Heart right ventricle (tissue), 16 donors: ENCODE measurements at regions of chr3 and their contacts with region 1.

Region 1: DNA sequence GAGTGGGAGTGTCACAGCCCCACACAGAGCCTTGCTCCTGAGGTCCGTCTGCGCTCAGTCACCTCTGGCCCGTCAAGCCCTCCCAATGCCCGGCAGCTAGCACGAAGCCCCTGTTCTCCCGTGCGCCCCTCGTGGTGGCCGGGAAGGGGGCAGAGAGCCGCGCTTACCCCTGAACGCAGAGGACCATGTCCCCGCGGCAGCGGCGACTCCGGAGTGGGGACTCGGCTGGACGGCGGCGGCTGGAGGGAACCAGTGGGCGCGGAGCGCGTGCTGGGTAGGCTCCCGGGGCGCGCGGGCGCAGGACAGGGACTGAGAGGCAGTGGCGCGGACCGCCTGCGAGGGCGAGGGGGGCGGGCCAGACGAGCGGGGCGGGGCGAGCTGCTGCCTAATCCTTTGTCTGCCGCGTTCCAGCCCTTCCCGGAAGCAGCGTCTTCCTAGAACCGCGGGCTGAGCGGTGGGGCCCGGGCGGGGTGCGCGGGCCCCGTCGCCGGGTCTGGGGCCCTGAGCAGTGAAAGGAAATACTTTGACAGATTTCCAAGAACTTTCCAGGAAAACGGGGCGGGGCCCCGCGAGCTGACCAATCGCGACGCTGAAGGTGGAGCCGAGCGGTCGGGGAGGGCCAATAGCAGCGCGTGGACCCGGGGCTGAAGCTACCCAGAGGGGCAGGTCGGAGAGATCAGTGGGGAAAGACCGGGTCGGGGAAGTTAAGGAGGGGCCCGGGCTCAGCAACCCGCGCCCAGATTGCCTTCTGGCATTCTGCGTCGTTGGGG is at the start of gene CISH:
- DNase-seq: peak; percentile 95 to 97
- ATAC-seq: peak; percentile 79 to 88 (median 84)
- H3K4me3 ChIP-seq: peak within 1 kb of the TSS; percentile 42 to 93 (median 78)
- H3K27ac ChIP-seq: peak within 1 kb of the TSS; percentile 72 to 99 (median 95)
- H3K4me1 ChIP-seq: peaks cover 11 to 82% (median 68%) of the 10 kb centered on the region in 9 donors
- H3K27me3 ChIP-seq: no peaks in the 10 kb centered on the region
- CTCF ChIP-seq: peak in 7 of 9 donors; percentile 29 to 58 (median 45)
- total RNA-seq, gene CISH: 5.4 to 131 (median 24.0) TPM

Region 2: GRCh38 chr3:50350527-50351322 is 260.9 kb before region 1 on chr3 and contains the starts of genes CYB561D2 and NPRL2:
- intact Hi-C with region 1: loop called in 3 of 10 experiments (anchors 5 kb)
- DNase-seq: peak; percentile 96 to 98
- ATAC-seq: peak; percentile 94 to 97 (median 96)
- H3K4me3 ChIP-seq: peak within 1 kb of the TSS; percentile 42 to 89 (median 72)
- H3K27ac ChIP-seq: peak within 1 kb of the TSS; percentile 84 to 97 (median 92)
- H3K4me1 ChIP-seq: peaks cover 21 to 63% (median 42%) of the 10 kb centered on the region in 9 donors
- H3K27me3 ChIP-seq: no peaks in the 10 kb centered on the region
- CTCF ChIP-seq: no peak
- total RNA-seq, gene CYB561D2: 3.9 to 10.9 (median 5.6) TPM
- total RNA-seq, gene NPRL2: 13.0 to 23.6 (median 16.3) TPM

Region 3: DNA sequence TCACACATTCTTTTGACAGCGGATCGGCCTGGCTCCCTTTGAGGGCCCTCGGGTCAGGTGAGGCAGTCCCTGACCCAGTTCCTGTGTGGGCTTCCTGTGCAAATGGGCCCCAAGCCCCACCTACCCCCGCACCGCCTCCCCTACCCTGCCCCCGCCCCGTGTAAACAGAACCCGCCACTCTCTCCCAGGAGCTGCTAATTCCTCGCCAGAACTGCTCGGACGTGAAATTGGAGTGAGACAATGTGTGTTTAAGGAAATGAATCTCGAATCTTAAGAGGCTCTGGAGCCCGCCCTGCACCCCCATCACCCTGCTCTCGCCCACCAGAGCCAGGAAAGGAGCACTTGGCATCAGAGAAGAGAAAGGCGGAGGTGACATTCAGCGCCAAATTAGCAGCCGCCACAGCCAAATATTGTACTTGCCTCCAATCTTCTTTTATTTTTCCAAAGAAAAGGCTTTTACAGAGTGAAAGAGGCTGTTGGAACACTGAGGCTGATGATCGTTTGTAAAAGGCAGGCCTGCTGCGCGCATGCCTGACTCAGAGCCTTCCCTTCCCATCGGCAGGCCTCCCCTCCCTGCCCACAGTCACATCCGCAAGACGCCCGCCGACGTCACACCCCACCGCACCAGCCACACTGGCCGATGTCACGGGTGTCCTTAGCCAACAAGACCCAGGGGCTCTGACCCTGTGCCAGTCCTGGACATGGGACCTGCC is 161.3 kb before region 1 on chr3:
- intact Hi-C with region 1: no loop called
- DNase-seq: peak; percentile 56 to 67
- ATAC-seq: peak in 7 of 8 donors; percentile 25 to 89 (median 70)
- H3K4me3 ChIP-seq: peak overlapping the region in 6 of 10 donors; percentile 28 to 48 (median 38)
- H3K27ac ChIP-seq: peak overlapping the region in 6 of 10 donors; percentile 37 to 78 (median 64)
- H3K4me1 ChIP-seq: peaks cover 0 to 9% (median 0%) of the 10 kb centered on the region in 9 donors
- H3K27me3 ChIP-seq: no peaks in the 10 kb centered on the region
- CTCF ChIP-seq: no peak

Region 4: DNA sequence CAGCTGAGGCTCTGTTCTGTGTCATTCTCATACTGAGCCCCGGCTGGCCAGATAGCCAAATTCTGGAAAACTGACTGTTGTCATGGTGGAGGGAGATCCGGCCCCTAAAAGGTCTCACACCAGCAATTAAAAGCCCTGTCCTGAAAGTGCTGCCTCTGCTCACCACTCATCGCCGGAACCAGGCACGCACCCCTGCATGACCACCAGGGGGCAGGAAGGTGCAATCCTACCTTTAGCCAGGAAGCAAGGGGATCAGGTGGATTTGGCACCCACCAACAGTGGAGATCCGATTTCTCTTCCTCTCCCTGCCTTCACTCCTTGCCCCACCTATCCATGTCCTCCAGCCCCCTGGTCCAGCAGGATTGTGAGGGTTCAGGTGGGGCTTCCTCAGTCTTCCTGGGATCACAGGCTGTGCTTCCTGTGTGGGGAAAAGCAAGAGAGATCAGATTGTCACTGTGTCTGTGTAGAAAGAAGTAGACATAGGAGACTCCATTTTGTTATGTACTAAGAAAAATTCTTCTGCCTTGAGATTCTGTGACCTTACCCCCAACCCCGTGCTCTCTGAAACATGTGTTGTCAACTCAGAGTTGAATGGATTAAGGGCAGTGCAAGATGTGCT is 92.1 kb before region 1 on chr3:
- intact Hi-C with region 1: loop called in 1 of 10 experiments (anchors 5 kb)
- DNase-seq: peak; percentile 40 to 59
- ATAC-seq: peak in 2 of 8 donors; percentile 32 to 37
- H3K4me3 ChIP-seq: no peak overlapping the region
- H3K27ac ChIP-seq: no peak overlapping the region
- H3K4me1 ChIP-seq: peaks cover 11 to 35% (median 21%) of the 10 kb centered on the region in 9 donors
- H3K27me3 ChIP-seq: peaks cover 0 to 3% (median 0%) of the 10 kb centered on the region in 7 donors
- CTCF ChIP-seq: peak; percentile 61 to 89 (median 87)

Region 5: GRCh38 chr3:50652709-50653108 is 41.1 kb after region 1 on chr3:
- intact Hi-C with region 1: loop called in 2 of 10 experiments (anchors 5 kb)
- DNase-seq: peak; percentile 37 to 52
- ATAC-seq: peak in 7 of 8 donors; percentile 7 to 43 (median 26)
- H3K4me3 ChIP-seq: no peak overlapping the region
- H3K27ac ChIP-seq: peak overlapping the region in 6 of 10 donors; percentile 44 to 88 (median 64)
- H3K4me1 ChIP-seq: peaks cover 6 to 50% (median 31%) of the 10 kb centered on the region in 9 donors
- H3K27me3 ChIP-seq: no peaks in the 10 kb centered on the region
- CTCF ChIP-seq: peak in 8 of 9 donors; percentile 28 to 64 (median 52)

Region 6: DNA sequence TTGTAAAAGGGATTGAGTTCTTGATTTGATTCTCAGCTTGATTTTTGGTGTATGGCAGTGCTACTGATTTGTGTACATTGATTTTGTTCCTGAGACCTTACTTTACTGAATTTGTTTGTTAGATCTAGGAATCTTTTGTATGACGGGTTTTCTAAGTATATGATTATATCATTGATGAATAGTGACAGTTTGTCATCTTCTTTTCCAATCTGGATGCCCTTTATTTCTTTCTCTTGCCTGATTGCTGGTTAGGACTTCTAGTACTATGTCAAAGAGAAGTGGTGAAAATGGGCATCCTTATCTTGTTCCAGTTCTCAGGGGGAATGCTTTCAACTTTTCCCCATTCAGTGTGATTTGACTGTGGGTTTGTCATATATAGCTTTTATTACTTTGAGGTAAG is 166.0 kb after region 1 on chr3:
- intact Hi-C with region 1: no loop called
- DNase-seq: no peak
- ATAC-seq: no peak
- H3K4me3 ChIP-seq: no peak overlapping the region
- H3K27ac ChIP-seq: no peak overlapping the region
- H3K4me1 ChIP-seq: no peaks in the 10 kb centered on the region
- H3K27me3 ChIP-seq: no peaks in the 10 kb centered on the region
- CTCF ChIP-seq: no peak

Region 7: GRCh38 chr3:51099794-51100535 is 488.3 kb after region 1 on chr3:
- intact Hi-C with region 1: loop called in 1 of 10 experiments (anchors 10 kb)
- DNase-seq: peak in 1 of 2 donors; percentile 21
- ATAC-seq: peak in 4 of 8 donors; percentile 27 to 67 (median 60)
- H3K4me3 ChIP-seq: no peak overlapping the region
- H3K27ac ChIP-seq: no peak overlapping the region
- H3K4me1 ChIP-seq: no peaks in the 10 kb centered on the region
- H3K27me3 ChIP-seq: no peaks in the 10 kb centered on the region
- CTCF ChIP-seq: peak in 8 of 9 donors; percentile 34 to 74 (median 60)

Region 8: GRCh38 chr3:51384726-51385473 is 773.3 kb after region 1 on chr3 and contains the start of gene MANF:
- intact Hi-C with region 1: loop called in 4 of 10 experiments (anchors 1 to 5 kb)
- DNase-seq: peak; percentile 97 to 98
- ATAC-seq: peak; percentile 97 to 99 (median 99)
- H3K4me3 ChIP-seq: peak within 1 kb of the TSS; percentile 73 to 97 (median 86)
- H3K27ac ChIP-seq: peak within 1 kb of the TSS; percentile 80 to 98 (median 94)
- H3K4me1 ChIP-seq: peaks cover 12 to 56% (median 49%) of the 10 kb centered on the region in 9 donors
- H3K27me3 ChIP-seq: no peaks in the 10 kb centered on the region
- CTCF ChIP-seq: peak in 1 of 9 donors; percentile 27
- total RNA-seq, gene MANF: 33.8 to 82.3 (median 45.1) TPM

Region 9: DNA sequence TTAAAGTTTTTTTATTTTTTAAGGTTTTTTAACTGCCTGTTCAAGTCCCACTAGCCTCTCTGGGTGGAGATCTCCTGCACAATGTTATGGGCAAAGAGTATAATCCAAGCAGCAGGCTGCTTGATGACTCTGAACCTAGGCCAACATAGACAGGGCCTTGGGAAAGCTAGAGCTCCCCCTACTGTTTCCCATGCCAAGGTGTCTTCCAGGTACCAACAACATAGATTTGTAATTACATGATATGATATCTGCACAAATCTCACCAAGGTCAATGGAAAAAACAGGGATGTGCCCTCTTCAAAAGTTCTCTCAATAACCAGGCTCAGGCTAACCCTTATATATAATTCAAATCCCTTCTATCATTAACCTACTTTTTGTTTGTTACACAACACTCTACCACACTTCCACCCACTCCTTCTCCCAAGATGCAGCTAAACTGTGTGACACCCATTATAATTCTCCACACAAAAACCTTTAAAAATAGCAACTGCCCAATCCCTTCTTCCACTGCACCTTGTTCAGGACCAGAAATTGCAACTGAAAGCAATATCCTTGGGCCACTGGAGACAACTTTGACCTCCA is 823.2 kb after region 1 on chr3:
- intact Hi-C with region 1: loop called in 1 of 10 experiments (anchors 5 kb)
- DNase-seq: peak in 1 of 2 donors; percentile 37
- ATAC-seq: peak in 7 of 8 donors; percentile 55 to 81 (median 70)
- H3K4me3 ChIP-seq: no peak overlapping the region
- H3K27ac ChIP-seq: no peak overlapping the region
- H3K4me1 ChIP-seq: peaks cover 0 to 6% (median 0%) of the 10 kb centered on the region in 9 donors
- H3K27me3 ChIP-seq: no peaks in the 10 kb centered on the region
- CTCF ChIP-seq: peak; percentile 46 to 82 (median 64)